ENCODE measurements at regions of chr4 and their contacts with region 1.

Region 1: GRCh38 chr4:11428899-11429698 is 405 bp upstream of the HS3ST1 start:
- DNase-seq: peak in 9 of 14 experiments; percentile 3 to 59 (median 17)
- ATAC-seq: peak; percentile 48
- H3K4me3 ChIP-seq: peak overlapping the region; percentile 47
- H3K4me3 Mint-ChIP-seq: peak overlapping the region; percentile 63
- H3K27ac ChIP-seq: no peak overlapping the region
- H3K27ac Mint-ChIP-seq: no peak overlapping the region
- H3K4me1 ChIP-seq: peaks cover 22% of the 10 kb centered on the region
- H3K4me1 Mint-ChIP-seq: peaks cover 13% of the 10 kb centered on the region
- H3K27me3 ChIP-seq: peaks cover 29 to 33% of the 10 kb centered on the region in 2 experiments
- H3K27me3 Mint-ChIP-seq: peaks cover 55% of the 10 kb centered on the region
- CTCF ChIP-seq: no peak

Region 2: DNA sequence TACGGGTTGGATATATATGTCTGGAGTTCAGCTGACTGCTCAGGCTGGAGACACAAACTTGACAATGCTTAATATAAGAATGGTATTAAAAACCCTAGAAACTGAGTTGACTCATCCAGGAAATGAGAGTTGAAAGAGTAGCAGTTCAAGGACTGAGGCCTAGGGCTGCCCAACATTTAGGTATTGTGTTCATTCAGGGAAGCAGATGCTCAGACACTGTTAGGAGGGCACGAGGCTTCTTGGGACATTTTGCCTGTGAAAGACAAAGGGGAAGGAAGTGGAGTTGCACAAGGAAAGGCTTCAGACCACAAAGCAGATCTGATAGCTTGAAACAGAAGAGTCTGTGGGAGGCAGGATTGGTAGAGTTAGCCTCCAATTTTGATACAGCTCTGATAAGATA is 51.6 kb after region 1 on chr4:
- CTCF ChIA-PET with region 1: no interaction called
- POLR2A ChIA-PET with region 1: no interaction called
- intact Hi-C with region 1: loop called in 1 of 2 experiments (anchors 10 kb)
- DNase-seq: peak in 5 of 14 experiments; percentile 9 to 71 (median 46)
- ATAC-seq: peak; percentile 96
- H3K4me3 ChIP-seq: no peak overlapping the region
- H3K4me3 Mint-ChIP-seq: no peak overlapping the region
- H3K27ac ChIP-seq: no peak overlapping the region
- H3K27ac Mint-ChIP-seq: no peak overlapping the region
- H3K4me1 ChIP-seq: peaks cover 8% of the 10 kb centered on the region
- H3K4me1 Mint-ChIP-seq: no peaks in the 10 kb centered on the region
- H3K27me3 ChIP-seq: no peaks in the 10 kb centered on the region
- H3K27me3 Mint-ChIP-seq: no peaks in the 10 kb centered on the region
- CTCF ChIP-seq: no peak

Region 3: DNA sequence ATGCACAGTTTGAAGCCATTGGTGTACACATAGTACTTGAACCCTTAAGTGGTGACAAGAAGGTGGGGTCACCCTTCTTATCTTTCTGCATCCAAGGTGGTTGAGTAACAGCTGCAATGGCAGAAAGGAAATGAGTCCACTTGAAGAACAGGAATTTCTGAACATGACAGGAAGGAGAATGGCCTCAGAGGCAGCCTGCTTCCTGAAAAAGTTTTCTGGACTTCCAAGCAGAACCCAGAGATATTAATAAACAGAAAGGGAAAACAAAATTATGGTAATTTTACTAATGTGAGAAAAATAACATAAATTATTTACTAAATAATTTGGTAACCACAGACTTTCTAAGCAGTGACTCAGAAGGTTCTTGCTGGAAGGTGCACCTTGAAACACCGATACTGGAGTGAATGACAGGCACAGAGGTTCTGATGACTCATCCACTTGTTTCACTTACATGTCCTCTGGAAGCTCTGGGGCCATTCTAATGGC is 119.5 kb after region 1 on chr4:
- CTCF ChIA-PET with region 1: no interaction called
- POLR2A ChIA-PET with region 1: no interaction called
- intact Hi-C with region 1: no loop called
- DNase-seq: no peak
- ATAC-seq: no peak
- H3K4me3 ChIP-seq: no peak overlapping the region
- H3K4me3 Mint-ChIP-seq: no peak overlapping the region
- H3K27ac ChIP-seq: no peak overlapping the region
- H3K27ac Mint-ChIP-seq: no peak overlapping the region
- H3K4me1 ChIP-seq: no peaks in the 10 kb centered on the region
- H3K4me1 Mint-ChIP-seq: no peaks in the 10 kb centered on the region
- H3K27me3 ChIP-seq: no peaks in the 10 kb centered on the region
- H3K27me3 Mint-ChIP-seq: peaks cover 3% of the 10 kb centered on the region
- CTCF ChIP-seq: no peak

Region 4: DNA sequence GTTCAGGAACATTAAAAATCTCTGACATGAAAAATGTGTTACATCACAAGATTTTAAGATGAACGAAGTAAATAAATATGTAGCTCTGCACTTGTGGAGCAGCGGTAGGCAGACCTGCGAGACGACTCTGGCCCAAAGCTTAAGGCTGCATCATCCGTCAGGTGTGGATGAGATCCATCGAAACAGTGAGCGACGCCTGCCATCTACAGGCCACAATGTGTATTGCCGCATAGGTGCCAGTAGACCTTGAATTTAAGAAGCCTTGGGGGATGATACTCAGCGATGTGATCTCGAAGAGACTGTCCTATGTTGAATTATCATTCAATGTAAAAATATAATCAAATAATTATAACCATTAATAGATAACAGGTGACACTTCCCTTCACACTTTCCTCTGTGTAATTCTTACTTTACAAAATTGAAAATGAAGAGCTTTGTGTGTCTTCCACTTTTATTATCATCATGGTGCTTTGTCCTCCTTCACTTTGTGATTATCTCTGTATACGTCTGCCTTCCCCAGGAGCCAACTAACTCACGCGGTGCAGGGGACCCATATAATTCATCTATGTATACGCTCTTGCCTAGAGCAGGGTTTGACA is 1204.1 kb after region 1 on chr4:
- CTCF ChIA-PET with region 1: no interaction called
- POLR2A ChIA-PET with region 1: no interaction called
- intact Hi-C with region 1: loop called (anchors 5 to 10 kb)
- DNase-seq: peak; percentile 44 to 77 (median 58)
- ATAC-seq: peak; percentile 68
- H3K4me3 ChIP-seq: no peak overlapping the region
- H3K4me3 Mint-ChIP-seq: no peak overlapping the region
- H3K27ac ChIP-seq: no peak overlapping the region
- H3K27ac Mint-ChIP-seq: no peak overlapping the region
- H3K4me1 ChIP-seq: no peaks in the 10 kb centered on the region
- H3K4me1 Mint-ChIP-seq: no peaks in the 10 kb centered on the region
- H3K27me3 ChIP-seq: no peaks in the 10 kb centered on the region
- H3K27me3 Mint-ChIP-seq: peaks cover 15% of the 10 kb centered on the region
- CTCF ChIP-seq: peak; percentile 84